ENCODE measurements at regions of chr14 and their contacts with region 1.

Region 1: DNA sequence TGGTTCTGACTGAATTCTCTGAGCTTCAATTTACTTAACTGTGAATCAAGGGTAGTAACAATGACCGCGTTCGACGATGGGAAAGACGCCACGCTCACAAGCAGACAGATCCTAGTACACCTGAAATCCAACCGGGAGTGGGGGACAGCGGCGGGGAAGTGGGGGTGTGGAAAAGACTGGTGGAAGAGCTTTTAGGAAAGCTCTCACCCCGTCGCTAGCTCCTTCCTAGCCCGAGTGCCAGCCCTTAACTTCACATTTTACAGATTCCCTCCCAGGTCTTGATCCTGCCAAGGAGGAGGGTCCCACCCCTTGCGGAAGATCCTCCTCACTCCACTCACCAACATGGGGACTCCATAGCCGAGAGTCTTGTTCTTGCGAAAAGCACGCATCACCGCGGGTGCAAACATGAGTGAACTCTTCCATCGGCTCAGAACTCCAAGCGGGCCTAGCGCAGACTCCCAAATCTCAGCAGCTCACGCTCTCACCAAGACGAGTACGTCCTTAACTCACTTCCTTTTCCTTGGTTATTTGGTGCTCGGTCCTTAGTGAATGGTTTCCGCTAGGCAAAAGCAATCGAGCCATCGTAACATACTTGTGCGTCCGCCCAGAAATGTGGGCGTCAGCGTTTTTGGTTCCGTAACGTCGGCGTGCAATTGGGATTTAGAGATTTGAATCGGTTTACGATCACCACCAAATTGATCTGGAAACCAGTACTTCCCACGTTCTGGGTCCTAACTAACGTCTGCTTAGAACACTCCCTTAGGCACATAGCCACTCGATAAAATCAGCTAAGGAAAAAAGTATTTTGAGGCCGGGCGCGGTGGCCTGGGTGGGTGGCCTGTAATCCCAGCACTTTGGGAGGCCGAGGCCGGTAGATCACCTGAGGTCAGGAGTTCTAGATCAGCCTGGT is at the start of gene COX16:
- DNase-seq: peak; percentile 95
- H3K4me3 Mint-ChIP-seq: peak within 1 kb of the TSS; percentile 98
- H3K27ac Mint-ChIP-seq: peak within 1 kb of the TSS; percentile 98
- H3K4me1 Mint-ChIP-seq: peaks cover 29% of the 10 kb centered on the region
- H3K27me3 Mint-ChIP-seq: no peaks in the 10 kb centered on the region
- CTCF ChIP-seq: no peak
- total RNA-seq, gene COX16: 45.3 and 55.6 TPM in 2 replicates

Region 2: GRCh38 chr14:70416725-70417349 is 57.4 kb after region 1 on chr14 and contains the start of gene SYNJ2BP:
- CTCF ChIA-PET with region 1: no interaction called
- POLR2A ChIA-PET with region 1: interaction called, 25 read pairs
- intact Hi-C with region 1: loop called (anchors 5 kb)
- DNase-seq: peak; percentile 88
- H3K4me3 Mint-ChIP-seq: peak within 1 kb of the TSS; percentile 96
- H3K27ac Mint-ChIP-seq: peak within 1 kb of the TSS; percentile 81
- H3K4me1 Mint-ChIP-seq: peaks cover 21% of the 10 kb centered on the region
- H3K27me3 Mint-ChIP-seq: no peaks in the 10 kb centered on the region
- CTCF ChIP-seq: no peak
- total RNA-seq, gene SYNJ2BP: 12.6 and 20.0 TPM in 2 replicates

Measured in MCF 10A (cell line).